Heart right ventricle (tissue), 16 donors: ENCODE measurements at regions of chr20 and their contacts with region 1.

Region 1: DNA sequence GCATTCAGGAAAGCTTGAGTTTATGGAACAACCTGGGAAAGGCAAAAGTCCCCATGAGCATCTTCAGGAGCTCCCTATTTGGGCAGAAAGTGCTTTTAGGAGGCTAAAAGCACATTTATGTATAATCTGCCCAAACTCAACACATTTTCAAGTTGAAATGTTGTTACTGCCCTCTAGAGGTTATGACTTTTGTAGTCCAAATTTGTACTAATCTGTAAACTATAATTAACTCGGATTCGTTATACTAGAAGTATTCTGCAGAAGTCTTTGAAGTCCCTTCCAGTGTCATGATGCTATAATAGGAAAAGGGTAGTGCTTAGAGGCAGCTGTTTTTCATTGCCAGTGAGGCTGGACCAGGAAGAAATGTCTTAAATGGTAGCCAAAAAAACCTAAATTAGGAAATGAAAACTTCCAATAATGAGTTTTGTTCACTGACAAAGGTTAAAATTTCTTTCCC is 44.8 kb upstream of the EMILIN3 start:
- DNase-seq: no peak
- ATAC-seq: peak; percentile 54 to 89 (median 79)
- H3K4me3 ChIP-seq: no peak overlapping the region
- H3K27ac ChIP-seq: peak overlapping the region; percentile 11 to 92 (median 78)
- H3K4me1 ChIP-seq: peaks cover 0 to 66% (median 39%) of the 10 kb centered on the region in 9 donors
- H3K27me3 ChIP-seq: no peaks in the 10 kb centered on the region
- CTCF ChIP-seq: peak; percentile 25 to 73 (median 56)

Region 2: DNA sequence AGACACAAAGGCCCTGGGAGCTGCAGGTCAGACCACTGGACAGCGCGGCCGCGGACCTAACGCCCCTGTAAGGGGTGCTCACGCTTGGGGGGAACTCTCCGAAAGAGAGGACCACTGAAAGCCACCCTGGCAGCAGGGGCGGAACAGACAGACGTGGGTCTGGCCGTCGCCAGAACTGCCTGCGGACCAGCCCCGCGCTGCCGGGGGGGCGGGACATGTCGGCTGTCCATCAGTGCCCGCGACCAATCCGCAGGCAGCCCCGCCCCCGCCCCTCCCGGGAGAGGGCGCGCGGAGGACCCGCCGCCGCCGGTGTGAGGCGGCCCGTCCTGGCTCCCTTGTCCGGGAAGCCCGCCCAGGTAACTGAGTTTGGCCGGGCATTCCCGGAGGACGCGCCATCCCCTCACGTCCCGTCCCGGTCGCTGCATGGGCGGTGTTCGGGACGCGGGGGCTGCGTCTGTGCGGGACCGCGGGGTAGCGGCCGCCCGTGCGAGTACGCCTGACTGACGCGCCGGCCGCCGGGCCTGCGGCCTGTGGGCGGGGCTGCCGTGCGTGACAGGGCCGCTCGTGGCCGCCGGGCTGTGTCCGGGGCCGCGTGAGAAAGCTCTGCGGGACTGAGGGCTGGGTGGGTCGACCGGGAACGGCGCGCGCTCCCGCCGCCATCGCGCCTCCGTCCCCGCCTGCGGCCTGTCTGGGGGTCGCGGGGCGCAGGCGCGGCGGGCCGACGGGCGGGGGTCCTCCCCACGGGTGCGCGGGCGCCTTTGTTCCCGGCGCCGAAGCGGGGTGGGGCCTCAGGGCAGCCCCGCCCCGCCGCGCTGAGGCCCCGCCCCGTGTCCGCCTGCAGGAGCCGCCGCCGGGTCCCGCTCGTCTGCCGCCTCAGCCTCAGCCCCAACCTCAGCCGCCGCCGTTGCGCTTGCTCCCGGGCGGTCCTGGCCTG is 274.5 kb before region 1 on chr20 and contains the start of gene PLCG1:
- intact Hi-C with region 1: loop called in 5 of 10 experiments (anchors 2 to 10 kb)
- DNase-seq: peak; percentile 91 to 93
- ATAC-seq: peak; percentile 83 to 90 (median 86)
- H3K4me3 ChIP-seq: peak within 1 kb of the TSS; percentile 71 to 99 (median 94)
- H3K27ac ChIP-seq: peak within 1 kb of the TSS; percentile 90 to 100 (median 98)
- H3K4me1 ChIP-seq: peaks cover 21 to 58% (median 50%) of the 10 kb centered on the region in 9 donors
- H3K27me3 ChIP-seq: peaks cover 0 to 9% (median 0%) of the 10 kb centered on the region in 7 donors
- CTCF ChIP-seq: no peak
- total RNA-seq, gene PLCG1: 36.6 to 63.6 (median 47.9) TPM

Region 3: DNA sequence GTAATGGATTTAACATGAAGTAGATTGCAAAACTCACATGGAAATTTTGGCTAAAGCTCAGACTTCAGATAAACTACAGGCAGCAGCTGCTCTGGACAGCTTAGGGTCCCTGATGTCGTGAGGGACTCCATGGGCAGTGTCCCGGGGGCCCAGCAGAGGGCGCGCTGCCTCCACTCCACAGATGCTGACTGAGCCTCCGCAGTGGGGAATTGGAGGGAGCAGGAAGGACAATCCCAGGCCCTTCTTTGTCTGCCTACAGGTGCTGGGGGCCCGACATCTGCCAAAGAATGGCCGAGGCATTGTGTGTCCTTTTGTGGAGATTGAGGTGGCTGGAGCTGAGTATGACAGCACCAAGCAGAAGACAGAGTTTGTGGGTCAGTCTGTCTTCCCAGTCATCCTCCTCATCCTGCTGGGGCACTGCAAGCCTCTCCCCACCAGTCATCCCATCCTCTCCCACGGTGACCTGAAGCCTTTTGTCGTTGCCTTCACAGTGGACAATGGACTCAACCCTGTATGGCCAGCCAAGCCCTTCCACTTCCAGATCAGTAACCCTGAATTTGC is 238.2 kb before region 1 on chr20:
- intact Hi-C with region 1: loop called in 4 of 10 experiments (anchors 5 to 10 kb)
- DNase-seq: peak; percentile 89 to 90
- ATAC-seq: peak; percentile 79 to 89 (median 85)
- H3K4me3 ChIP-seq: peak overlapping the region in 1 of 10 donors; percentile 0
- H3K27ac ChIP-seq: peak overlapping the region; percentile 66 to 93 (median 85)
- H3K4me1 ChIP-seq: peaks cover 30 to 72% (median 62%) of the 10 kb centered on the region in 9 donors
- H3K27me3 ChIP-seq: no peaks in the 10 kb centered on the region
- CTCF ChIP-seq: peak; percentile 94 to 99 (median 98)

Region 4: GRCh38 chr20:41232973-41233926 is 178.2 kb before region 1 on chr20:
- intact Hi-C with region 1: loop called in 1 of 10 experiments (anchors 5 kb)
- DNase-seq: no peak
- ATAC-seq: peak; percentile 32 to 70 (median 55)
- H3K4me3 ChIP-seq: peak overlapping the region in 2 of 10 donors; percentile 26 to 34
- H3K27ac ChIP-seq: peak overlapping the region; percentile 63 to 88 (median 82)
- H3K4me1 ChIP-seq: peaks cover 24 to 74% (median 69%) of the 10 kb centered on the region in 9 donors
- H3K27me3 ChIP-seq: no peaks in the 10 kb centered on the region
- CTCF ChIP-seq: no peak

Region 5: GRCh38 chr20:41347523-41348429 is 63.6 kb before region 1 on chr20:
- intact Hi-C with region 1: loop called in 7 of 10 experiments (anchors 5 kb)
- DNase-seq: no peak
- ATAC-seq: peak; percentile 12 to 66 (median 52)
- H3K4me3 ChIP-seq: no peak overlapping the region
- H3K27ac ChIP-seq: peak overlapping the region in 4 of 10 donors; percentile 7 to 39 (median 26)
- H3K4me1 ChIP-seq: peaks cover 0 to 8% (median 0%) of the 10 kb centered on the region in 9 donors
- H3K27me3 ChIP-seq: no peaks in the 10 kb centered on the region
- CTCF ChIP-seq: no peak

Region 6: GRCh38 chr20:41357424-41358163 is 53.8 kb before region 1 on chr20:
- intact Hi-C with region 1: loop called in 1 of 10 experiments (anchors 5 kb)
- DNase-seq: no peak
- ATAC-seq: peak in 2 of 8 donors; percentile 11 to 18
- H3K4me3 ChIP-seq: no peak overlapping the region
- H3K27ac ChIP-seq: peak overlapping the region in 1 of 10 donors; percentile 16
- H3K4me1 ChIP-seq: peaks cover 0 to 43% (median 5%) of the 10 kb centered on the region in 9 donors
- H3K27me3 ChIP-seq: no peaks in the 10 kb centered on the region
- CTCF ChIP-seq: no peak

Region 7: DNA sequence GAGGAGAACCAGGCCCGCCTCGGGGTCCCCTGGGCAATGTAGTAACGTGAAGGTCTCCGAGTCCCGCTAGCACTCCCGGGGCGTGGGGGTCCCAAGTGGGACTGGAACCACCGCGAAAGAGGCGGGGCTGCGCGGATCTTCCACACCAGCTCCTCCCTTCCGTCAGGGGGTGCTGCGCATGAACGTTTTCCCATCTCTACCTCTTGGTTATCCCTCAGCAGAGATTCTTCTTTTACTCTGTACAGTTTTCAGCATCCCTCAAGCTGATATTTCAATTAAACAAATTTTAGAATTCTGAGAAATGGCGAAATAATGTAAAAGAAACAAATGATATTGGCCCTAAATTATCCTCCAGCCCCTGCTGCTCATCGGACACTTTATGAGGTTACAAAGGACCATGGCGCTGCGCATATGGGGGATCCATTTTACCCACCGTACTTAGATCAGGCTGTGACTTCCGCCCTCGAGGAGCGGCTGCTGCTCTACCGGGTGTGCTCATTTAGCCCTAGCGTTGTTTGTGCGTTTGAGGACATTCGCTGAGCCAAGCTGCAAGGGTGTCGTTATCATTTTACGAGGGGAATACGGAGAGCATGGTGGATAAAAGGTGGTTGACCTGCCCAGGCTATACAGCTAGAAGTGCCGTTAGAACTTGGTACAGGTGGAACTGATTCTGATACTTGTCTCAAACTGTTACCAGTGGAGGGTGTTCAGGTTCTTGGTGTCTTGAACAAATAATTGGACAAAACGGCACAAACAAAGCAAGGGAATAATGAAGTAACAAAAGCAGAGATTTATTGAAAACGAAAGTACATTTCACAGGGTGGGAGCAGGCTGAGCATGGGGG is 281.9 kb after region 1 on chr20:
- intact Hi-C with region 1: loop called in 1 of 10 experiments (anchors 10 kb)
- DNase-seq: peak; percentile 74 to 82
- ATAC-seq: peak; percentile 94 to 98 (median 96)
- H3K4me3 ChIP-seq: peak overlapping the region; percentile 62 to 95 (median 82)
- H3K27ac ChIP-seq: peak overlapping the region; percentile 81 to 99 (median 93)
- H3K4me1 ChIP-seq: peaks cover 0 to 16% (median 6%) of the 10 kb centered on the region in 9 donors
- H3K27me3 ChIP-seq: peaks cover 0 to 5% (median 0%) of the 10 kb centered on the region in 7 donors
- CTCF ChIP-seq: peak in 8 of 9 donors; percentile 34 to 79 (median 60)